Activated T-helper 1 cell treated with anti-CD3 and anti-CD28 coated beads, Interleukin-12 subunit alpha, Interleukin-12 subunit beta, Interleukin-2, Interleukin-4 antibody, amounts not matched to agents 30 ng/mL and 10 ng/mL and 1 ng/mL, durations not matched to agents 14 hours and 24 hours and 36 hours (primary cell): ENCODE measurements at regions of chr2 and their contacts with region 1.

Region 1: DNA sequence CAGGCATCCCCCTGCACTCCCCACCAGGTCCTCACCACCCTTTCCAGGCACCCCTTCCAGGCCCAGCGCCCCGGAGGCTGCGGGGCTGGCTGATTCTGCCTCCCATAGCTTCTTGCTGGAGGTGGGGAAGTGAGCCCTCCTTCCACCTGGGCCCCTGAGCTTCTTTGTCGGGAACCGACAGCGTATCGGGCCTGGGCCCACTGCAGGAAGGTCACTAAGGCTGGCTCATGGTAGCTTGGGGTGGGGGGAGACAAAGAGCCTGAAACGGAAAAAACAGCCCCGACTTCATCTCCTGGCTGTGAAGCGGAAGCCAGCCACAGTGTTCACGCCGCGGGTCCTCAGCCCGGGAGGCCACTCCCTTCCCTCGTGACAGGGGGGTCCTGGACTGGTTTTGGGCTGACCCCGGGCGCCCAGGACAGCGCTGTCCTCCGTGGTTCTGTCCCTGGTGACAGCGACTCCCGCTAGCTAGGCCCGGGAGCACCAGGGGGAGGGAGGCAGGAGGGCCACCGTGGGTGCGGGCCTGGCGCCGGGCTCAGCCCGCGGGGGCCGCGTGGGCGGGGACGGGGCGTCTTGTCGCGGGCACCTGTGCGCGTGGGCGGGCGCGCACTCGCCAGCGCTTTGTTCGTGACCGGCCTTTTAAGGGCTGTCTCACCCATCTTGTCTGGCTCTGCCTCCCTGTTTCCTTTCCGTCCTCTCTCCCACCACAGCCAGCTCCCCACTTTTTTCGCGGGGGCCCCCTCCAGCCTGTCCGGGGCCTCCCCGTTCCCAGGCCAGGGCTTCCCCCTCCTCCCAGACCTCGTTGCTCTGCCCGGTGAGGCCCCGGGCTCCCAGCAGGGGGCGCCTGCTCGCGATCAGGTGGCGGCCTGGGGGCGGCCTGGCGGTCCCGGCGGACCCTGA is 64.9 kb downstream of the DNMT3A start:
- DNase-seq: peak; percentile 73
- H3K4me3 Mint-ChIP-seq: peak overlapping the region; percentile 53
- H3K27ac Mint-ChIP-seq: peak overlapping the region; percentile 81
- H3K4me1 Mint-ChIP-seq: peaks cover 67% of the 10 kb centered on the region
- H3K27me3 Mint-ChIP-seq: no peaks in the 10 kb centered on the region

Region 2: DNA sequence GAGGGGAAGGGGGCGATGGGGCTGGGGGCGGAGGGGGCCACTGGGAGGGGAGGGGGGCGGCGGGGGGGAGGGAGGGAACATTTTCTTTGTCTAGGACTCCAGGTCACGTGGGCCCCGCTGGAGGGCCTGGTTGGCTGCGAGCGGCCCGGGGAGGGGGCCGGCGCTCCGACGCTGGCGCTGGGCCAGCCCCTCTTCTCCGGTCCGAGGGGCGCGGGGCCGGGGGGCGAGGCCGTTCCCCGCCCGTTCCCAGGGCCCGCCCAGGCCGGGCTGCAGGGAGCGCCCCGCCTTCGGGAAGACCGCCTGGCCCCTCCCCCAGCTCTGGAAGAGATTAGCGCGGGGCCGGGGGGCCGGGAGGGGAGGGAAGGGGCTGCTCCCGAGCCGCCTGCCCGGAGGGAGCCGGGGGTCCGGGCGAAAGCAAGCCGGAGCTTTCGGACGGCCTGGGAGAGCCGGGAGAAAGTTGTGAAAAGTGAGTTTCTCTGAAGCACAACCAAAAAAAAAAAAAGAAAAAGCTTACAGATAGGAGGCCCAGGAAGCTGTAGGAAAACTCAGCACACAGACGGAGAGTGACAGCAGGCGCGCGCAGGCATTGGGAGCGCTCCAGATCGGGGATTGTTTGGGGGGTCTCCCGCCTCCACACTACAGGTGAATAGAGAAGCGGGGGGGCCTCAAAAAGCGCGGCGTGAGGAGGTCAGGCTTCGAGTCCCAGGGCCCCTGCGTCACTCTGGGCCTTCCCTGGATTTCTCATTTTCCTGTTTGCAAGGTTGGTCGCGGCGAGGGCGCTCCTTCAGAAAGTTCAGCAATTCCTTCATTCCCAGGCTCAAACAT is 24.3 kb before region 1 on chr2:
- intact Hi-C with region 1: loop called (anchors 2 kb)
- DNase-seq: peak; percentile 62
- H3K4me3 Mint-ChIP-seq: peak overlapping the region; percentile 77
- H3K27ac Mint-ChIP-seq: peak overlapping the region; percentile 53
- H3K4me1 Mint-ChIP-seq: peaks cover 31% of the 10 kb centered on the region
- H3K27me3 Mint-ChIP-seq: no peaks in the 10 kb centered on the region

Region 3: DNA sequence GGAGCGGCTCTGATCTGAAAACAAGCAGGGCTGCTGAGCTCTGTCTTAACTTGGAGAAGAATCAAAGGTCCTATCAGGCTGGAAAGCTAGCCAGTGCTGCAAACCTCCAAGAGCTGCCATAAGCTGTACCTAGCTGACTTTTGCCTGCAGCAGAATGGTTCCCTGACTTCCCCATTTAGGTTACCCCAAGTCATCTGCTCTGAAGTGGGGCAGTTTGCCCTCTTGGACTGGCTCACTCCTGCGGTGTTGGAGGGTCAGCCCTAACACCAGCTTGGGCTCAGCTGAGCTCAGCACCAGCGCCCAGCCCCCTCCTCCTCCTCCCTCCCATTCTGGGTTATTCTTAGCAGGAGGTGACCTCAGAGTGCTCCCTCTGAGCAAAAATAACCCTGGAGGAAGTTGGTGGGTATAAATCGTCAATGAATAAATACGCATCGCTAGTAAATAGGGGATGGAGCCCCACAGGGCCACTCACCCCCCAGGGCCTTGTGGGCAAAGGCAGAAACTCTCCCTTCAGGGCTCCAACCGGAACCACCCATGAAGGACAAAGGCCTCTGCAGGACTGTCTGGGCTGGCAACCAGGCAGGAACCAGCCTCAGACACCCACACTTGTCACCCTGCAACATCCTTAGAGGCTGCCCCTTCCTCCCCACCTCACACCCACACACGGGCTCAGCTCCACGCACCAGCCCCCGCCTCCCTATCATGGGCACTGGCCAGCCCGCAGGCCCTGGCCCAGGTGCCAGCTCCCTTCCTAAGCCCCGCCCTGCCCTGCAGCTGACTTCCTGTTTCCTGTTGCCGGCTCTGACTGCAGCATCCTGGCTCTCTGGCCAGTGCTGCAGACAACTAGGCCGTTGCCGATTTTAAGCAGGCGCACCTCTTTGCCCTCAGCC is 18.0 kb after region 1 on chr2:
- intact Hi-C with region 1: loop called (anchors 2 kb)
- DNase-seq: peak; percentile 77
- H3K4me3 Mint-ChIP-seq: peak overlapping the region; percentile 62
- H3K27ac Mint-ChIP-seq: peak overlapping the region; percentile 90
- H3K4me1 Mint-ChIP-seq: peaks cover 44% of the 10 kb centered on the region
- H3K27me3 Mint-ChIP-seq: no peaks in the 10 kb centered on the region